Tibial artery (tissue), 4 donors: ENCODE measurements at regions of chr5 and their contacts with region 1.

Region 1: DNA sequence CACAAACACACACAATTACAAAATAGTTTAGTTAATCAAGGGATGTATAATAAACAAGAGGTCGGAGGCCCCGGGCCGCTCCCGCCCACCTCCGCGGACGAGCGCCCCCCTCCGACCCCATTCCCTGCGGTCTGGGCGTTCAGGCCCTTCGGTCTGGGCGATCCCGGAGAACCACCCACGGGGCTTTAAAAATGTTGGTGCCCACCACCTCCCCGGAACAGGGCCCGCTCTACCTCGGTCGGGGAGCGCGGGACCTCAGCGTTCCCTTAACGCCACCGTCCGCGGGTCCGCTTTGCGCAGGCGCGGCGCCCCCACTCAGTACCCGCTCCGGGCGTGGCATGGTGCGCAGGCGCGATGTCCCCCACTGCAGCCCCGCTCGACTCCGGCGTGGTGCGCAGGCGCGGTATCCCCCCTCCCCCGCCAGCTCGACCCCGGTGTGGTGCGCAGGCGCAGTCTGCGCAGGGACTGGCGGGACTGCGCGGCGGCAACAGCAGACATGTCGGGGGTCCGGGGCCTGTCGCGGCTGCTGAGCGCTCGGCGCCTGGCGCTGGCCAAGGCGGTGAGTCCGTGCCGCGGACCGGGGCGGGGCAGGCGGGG is at the starts of genes CCDC127 and SDHA:
- DNase-seq: peak; percentile 95 to 98
- H3K4me3 ChIP-seq: peak within 1 kb of the TSS; percentile 73 to 95
- H3K27ac ChIP-seq: peak within 1 kb of the TSS; percentile 78 to 86
- H3K4me1 ChIP-seq: peaks cover 0 to 47% (median 19%) of the 10 kb centered on the region in 4 donors
- H3K27me3 ChIP-seq: no peaks in the 10 kb centered on the region
- CTCF ChIP-seq: peak; percentile 7 to 18

Region 2: GRCh38 chr5:188488-189481 is 29.2 kb before region 1 on chr5:
- intact Hi-C with region 1: loop called (anchors 2 kb)
- DNase-seq: peak; percentile 83 to 90
- H3K4me3 ChIP-seq: peak overlapping the region; percentile 12 to 42
- H3K27ac ChIP-seq: no peak overlapping the region
- H3K4me1 ChIP-seq: peaks cover 0 to 28% (median 23%) of the 10 kb centered on the region in 4 donors
- H3K27me3 ChIP-seq: peaks cover 0 to 11% of the 10 kb centered on the region in 2 donors
- CTCF ChIP-seq: peak; percentile 92 to 97

Region 3: DNA sequence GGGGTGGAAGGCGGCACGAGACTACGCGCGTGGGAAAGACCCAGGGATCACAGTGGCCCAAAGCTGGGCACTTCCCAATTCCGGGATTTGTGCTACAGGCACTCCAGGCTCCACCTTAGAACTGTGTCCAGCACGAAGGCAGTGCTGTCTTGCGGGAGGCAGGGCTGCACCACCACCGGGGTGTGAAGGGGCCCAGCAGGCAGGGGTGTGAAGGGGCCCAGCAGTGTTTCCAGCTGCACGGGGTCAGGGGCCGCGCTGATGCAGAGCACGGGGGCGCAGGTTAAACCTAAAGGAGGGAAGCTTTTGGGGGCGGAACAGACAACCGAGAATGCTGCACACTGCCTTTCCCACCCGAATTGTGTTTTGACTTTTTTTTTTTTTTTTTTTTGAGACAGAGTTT is 52.4 kb after region 1 on chr5:
- intact Hi-C with region 1: loop called (anchors 5 kb)
- DNase-seq: no peak
- H3K4me3 ChIP-seq: peak overlapping the region; percentile 96 to 99
- H3K27ac ChIP-seq: peak overlapping the region in 1 of 2 donors; percentile 88
- H3K4me1 ChIP-seq: peaks cover 0 to 30% (median 16%) of the 10 kb centered on the region in 4 donors
- H3K27me3 ChIP-seq: no peaks in the 10 kb centered on the region
- CTCF ChIP-seq: no peak